ENCODE measurements at regions of chr3 and their contacts with region 1.

Region 1: DNA sequence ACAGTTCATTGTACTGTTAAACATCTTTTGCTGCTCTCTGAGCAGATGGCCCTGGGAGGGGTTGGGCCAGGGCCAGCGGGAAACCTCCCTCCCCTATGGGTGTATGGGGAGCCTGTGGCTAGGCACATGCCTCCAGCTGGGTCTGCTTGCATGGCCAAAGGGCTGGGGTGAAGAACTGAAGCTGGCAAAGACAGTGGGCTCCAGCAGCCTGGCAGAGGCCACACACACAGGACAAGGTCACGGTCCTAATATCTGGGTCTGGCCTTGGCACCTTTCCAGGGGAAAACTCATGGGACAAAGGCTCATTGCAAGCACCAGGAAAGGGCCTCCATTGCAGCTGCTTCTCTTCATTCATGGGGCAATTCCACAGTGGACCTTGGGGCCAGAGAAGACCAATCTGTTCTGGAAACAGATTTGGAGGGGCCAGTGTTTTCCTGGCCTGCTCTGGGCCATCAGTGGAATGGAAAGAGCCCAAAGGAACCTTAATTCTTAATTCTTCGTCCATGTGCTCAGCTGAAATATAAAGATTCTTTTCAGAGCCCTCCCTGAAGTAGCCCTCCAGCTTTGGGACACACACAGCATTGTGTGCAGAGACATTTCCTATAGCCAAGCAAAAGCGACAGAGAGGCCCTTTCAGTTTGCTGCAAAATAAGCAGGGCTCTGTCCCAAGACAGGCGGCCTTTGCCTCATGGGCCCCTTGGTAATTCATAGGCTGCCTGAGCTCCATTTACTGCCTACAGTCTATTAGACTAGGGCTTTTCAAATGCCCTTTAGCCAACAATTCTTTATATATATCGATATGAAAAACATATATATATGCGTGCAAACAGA is 11.3 kb upstream of the LIMD1 start:
- DNase-seq: no peak
- H3K4me3 ChIP-seq: no peak overlapping the region
- H3K27ac ChIP-seq: no peak overlapping the region
- H3K4me1 ChIP-seq: peaks cover 14% of the 10 kb centered on the region
- H3K27me3 ChIP-seq: no peaks in the 10 kb centered on the region
- CTCF ChIP-seq: no peak
- POLR2A ChIP-seq: no peak

Region 2: GRCh38 chr3:45516829-45517228 is 66.4 kb before region 1 on chr3:
- intact Hi-C with region 1: loop called (anchors 10 kb)
- DNase-seq: no peak
- H3K4me3 ChIP-seq: no peak overlapping the region
- H3K27ac ChIP-seq: no peak overlapping the region
- H3K4me1 ChIP-seq: no peaks in the 10 kb centered on the region
- H3K27me3 ChIP-seq: no peaks in the 10 kb centered on the region
- CTCF ChIP-seq: no peak
- POLR2A ChIP-seq: no peak

Region 3: GRCh38 chr3:46089237-46090011 is 506.2 kb after region 1 on chr3:
- intact Hi-C with region 1: no loop called
- DNase-seq: peak in 1 of 2 donors; percentile 90
- H3K4me3 ChIP-seq: no peak overlapping the region
- H3K27ac ChIP-seq: peak overlapping the region; percentile 20
- H3K4me1 ChIP-seq: peaks cover 26% of the 10 kb centered on the region
- H3K27me3 ChIP-seq: no peaks in the 10 kb centered on the region
- CTCF ChIP-seq: no peak
- POLR2A ChIP-seq: no peak

Measured in vagina (tissue), 2 donors.